ENCODE measurements at regions of chr17 and their contacts with region 1.

Region 1: DNA sequence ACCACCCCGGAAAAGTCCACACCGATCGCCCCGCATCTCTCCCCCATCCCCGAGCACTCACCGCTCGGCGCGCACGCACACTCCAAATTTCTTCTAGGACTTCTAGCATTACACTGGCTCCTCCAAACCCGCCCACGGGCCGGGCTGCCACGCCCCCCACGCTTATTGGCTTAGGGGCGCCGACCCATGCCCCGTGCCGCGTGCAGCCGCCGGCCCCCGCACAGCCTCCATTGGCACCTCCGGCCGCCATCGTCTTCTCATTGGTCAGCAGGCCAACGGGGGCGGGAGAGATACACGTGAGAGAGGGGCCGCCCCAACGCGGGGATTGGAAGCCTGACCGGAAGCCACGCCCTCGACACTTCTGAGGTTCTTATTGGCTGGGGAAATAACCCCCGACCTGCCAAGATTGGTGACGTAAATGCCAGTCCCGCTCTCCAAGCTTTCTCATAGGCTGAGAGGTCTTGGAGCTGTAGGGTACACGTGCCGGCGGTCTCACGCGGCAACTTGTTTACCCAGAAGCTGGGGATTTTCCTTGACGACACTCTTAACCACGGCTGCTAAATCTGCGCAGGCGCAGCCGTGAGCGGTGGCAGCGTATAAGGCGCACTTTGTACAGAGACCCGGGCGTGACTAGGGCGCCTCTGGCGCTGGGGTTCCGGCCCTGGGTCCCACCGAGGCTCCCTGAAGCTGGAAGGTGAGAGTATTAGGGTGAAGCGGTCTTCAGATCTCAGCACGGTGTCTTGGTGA is 4.2 kb upstream of the PER1 start:
- DNase-seq: peak; percentile 100
- ATAC-seq: peak; percentile 73
- H3K4me3 Mint-ChIP-seq: no peak overlapping the region
- H3K27ac Mint-ChIP-seq: no peak overlapping the region
- H3K4me1 Mint-ChIP-seq: peaks cover 59% of the 10 kb centered on the region
- H3K27me3 Mint-ChIP-seq: no peaks in the 10 kb centered on the region
- CTCF ChIP-seq: no peak

Region 2: GRCh38 chr17:8131844-8132441 is 24.5 kb before region 1 on chr17:
- CTCF ChIA-PET with region 1: interaction called, 37 read pairs
- POLR2A ChIA-PET with region 1: interaction called, 228 read pairs
- intact Hi-C with region 1: no loop called
- DNase-seq: no peak
- ATAC-seq: peak; percentile 63
- H3K4me3 Mint-ChIP-seq: no peak overlapping the region
- H3K27ac Mint-ChIP-seq: no peak overlapping the region
- H3K4me1 Mint-ChIP-seq: peaks cover 8% of the 10 kb centered on the region
- H3K27me3 Mint-ChIP-seq: peaks cover 6% of the 10 kb centered on the region
- CTCF ChIP-seq: no peak

Region 3: GRCh38 chr17:8237175-8237574 is 80.8 kb after region 1 on chr17:
- CTCF ChIA-PET with region 1: no interaction called
- POLR2A ChIA-PET with region 1: no interaction called
- intact Hi-C with region 1: no loop called
- DNase-seq: no peak
- ATAC-seq: no peak
- H3K4me3 Mint-ChIP-seq: no peak overlapping the region
- H3K27ac Mint-ChIP-seq: no peak overlapping the region
- H3K4me1 Mint-ChIP-seq: peaks cover 11% of the 10 kb centered on the region
- H3K27me3 Mint-ChIP-seq: no peaks in the 10 kb centered on the region
- CTCF ChIP-seq: no peak

Measured in activated CD8-positive, alpha-beta T cell treated with anti-CD3 and anti-CD28 coated beads for 36 hours (primary cell).